ENCODE measurements at regions of chr19 and their contacts with region 1.

Region 1: DNA sequence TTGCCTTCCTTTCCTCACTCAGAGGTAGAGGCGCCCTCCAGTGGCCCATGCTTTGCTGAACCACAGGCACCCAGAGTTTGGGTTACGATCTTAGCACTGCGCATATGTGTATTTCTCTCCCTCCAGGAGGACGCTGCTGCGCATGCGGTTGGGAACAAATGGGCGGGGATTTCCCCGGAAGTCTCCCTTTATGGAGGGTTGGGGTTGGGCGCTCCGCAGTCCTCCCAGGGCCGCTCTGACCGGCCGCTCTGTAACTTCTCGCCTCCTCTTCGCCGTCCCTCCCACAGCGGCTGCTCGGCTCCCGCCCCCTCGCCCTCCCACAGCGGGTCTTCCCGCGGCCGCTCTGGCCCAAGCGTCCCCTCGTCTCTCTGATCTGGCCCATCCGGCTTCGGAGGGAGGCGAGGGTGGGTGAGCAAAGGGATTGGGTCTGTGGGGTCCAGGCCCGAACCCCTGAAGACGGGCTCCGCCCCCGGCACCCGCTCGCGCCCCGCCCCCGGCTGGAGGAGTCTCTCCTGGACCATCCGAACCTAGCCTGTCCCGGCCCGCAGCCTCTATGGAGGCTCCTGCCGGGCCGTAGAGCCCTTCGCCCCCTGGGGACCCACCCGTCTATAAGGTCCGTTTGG is at the start of gene MEGF8:
- H3K4me3 Mint-ChIP-seq: peak within 1 kb of the TSS; percentile 83
- H3K27ac Mint-ChIP-seq: peak within 1 kb of the TSS; percentile 81
- H3K4me1 Mint-ChIP-seq: peaks cover 28% of the 10 kb centered on the region
- H3K27me3 Mint-ChIP-seq: peaks cover 47% of the 10 kb centered on the region

Region 2: GRCh38 chr19:42132851-42133528 is 192.4 kb before region 1 on chr19:
- intact Hi-C with region 1: loop called (anchors 5 kb)
- H3K4me3 Mint-ChIP-seq: peak overlapping the region; percentile 89
- H3K27ac Mint-ChIP-seq: peak overlapping the region; percentile 58
- H3K4me1 Mint-ChIP-seq: peaks cover 65% of the 10 kb centered on the region
- H3K27me3 Mint-ChIP-seq: no peaks in the 10 kb centered on the region

Measured in dendritic cell treated with granulocyte-macrophage colony-stimulating factor and Interleukin-4, amounts not matched to agents 40 ng/mL and 50 ng/mL, for 4 days (primary cell).